ENCODE measurements at regions of chr2 and their contacts with region 1.

Region 1: DNA sequence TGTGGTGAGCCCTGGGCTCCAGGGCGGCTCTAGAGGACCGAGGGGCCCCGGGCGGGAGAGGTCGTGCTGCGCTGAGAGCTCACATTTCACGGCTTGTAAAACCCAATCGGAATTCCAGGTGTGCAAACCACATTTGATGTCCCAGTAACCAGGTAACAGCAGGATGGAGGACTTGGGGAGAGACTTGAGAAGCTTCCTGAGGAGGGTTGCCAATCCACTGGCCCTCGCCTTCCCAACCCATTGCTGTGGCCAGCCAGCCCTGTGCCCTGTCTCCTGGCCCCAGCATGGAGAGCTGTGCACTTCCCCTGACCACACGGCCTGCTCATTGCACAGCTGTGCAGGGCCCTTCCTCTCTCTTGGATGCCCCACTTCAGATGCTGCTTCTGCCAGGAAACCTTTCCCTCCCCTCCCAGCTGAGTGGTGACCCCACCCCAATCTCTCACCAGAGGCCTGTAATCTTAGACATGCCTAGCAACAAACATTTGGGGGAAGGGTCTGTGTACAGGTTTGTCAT is 39.6 kb downstream of the ASB1 start:
- DNase-seq: no peak
- ATAC-seq: no peak
- H3K4me3 Mint-ChIP-seq: no peak overlapping the region
- H3K27ac Mint-ChIP-seq: no peak overlapping the region
- H3K4me1 Mint-ChIP-seq: peaks cover 9% of the 10 kb centered on the region
- H3K27me3 Mint-ChIP-seq: peaks cover 4% of the 10 kb centered on the region

Region 2: GRCh38 chr2:238370823-238371372 is 95.4 kb before region 1 on chr2:
- CTCF ChIA-PET with region 1: interaction called, 15 read pairs
- DNase-seq: peak; percentile 67
- ATAC-seq: peak; percentile 76
- H3K4me3 Mint-ChIP-seq: no peak overlapping the region
- H3K27ac Mint-ChIP-seq: no peak overlapping the region
- H3K4me1 Mint-ChIP-seq: peaks cover 5% of the 10 kb centered on the region
- H3K27me3 Mint-ChIP-seq: no peaks in the 10 kb centered on the region

Region 3: GRCh38 chr2:238513346-238513745 is 47.0 kb after region 1 on chr2:
- CTCF ChIA-PET with region 1: no interaction called
- DNase-seq: peak; percentile 62
- ATAC-seq: peak; percentile 63
- H3K4me3 Mint-ChIP-seq: no peak overlapping the region
- H3K27ac Mint-ChIP-seq: no peak overlapping the region
- H3K4me1 Mint-ChIP-seq: peaks cover 4% of the 10 kb centered on the region
- H3K27me3 Mint-ChIP-seq: peaks cover 10% of the 10 kb centered on the region

Region 4: DNA sequence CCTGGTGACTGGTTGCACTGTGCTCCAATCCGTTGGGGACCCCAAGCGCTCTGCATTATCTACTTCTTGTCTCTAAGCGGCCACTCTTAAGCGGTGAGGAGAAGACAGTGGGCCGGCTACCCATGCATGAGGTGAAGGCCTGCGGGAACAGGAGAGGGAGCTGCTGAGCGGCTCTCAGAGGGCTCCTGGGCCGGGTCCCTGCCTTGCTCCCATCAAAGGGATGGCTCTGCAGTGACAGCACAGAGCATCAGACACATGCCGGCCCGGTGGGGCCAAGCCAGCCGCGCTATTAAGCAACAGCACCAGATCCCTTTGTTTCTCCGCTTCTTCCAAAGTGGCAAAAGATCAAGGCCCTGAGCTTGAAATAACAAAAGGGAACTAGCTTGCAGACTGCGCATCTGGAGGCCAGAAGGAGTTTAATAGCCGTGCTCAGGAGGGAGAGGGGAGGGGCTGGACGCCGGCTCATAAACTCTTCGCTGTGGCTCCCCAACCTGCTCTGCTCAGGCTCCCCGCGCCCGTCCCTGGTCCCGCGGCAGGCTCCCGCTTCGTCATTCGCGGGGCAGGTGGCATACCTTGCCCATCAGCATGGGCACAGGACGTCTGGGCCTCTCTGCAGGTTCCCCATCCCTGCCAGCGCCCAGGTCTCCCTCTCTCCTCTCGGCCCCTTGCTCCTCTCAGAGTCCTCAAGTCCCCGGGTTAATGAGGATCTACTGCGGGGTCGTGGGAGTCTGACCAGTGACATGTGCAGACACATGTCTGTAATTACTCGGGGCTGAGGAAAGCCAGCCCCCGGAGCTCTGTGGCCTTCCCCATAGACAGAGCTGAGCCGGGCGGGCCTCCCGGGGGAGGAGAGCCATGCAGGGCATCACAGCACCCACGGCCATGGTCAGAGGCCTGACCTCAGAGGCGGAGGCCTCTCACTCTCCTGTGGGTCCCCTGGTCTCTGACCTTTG is 57.1 kb after region 1 on chr2:
- CTCF ChIA-PET with region 1: no interaction called
- DNase-seq: no peak
- ATAC-seq: no peak
- H3K4me3 Mint-ChIP-seq: no peak overlapping the region
- H3K27ac Mint-ChIP-seq: no peak overlapping the region
- H3K4me1 Mint-ChIP-seq: no peaks in the 10 kb centered on the region
- H3K27me3 Mint-ChIP-seq: peaks cover 5% of the 10 kb centered on the region

Region 5: GRCh38 chr2:238573065-238573778 is 106.9 kb after region 1 on chr2:
- CTCF ChIA-PET with region 1: no interaction called
- DNase-seq: no peak
- ATAC-seq: no peak
- H3K4me3 Mint-ChIP-seq: no peak overlapping the region
- H3K27ac Mint-ChIP-seq: no peak overlapping the region
- H3K4me1 Mint-ChIP-seq: no peaks in the 10 kb centered on the region
- H3K27me3 Mint-ChIP-seq: no peaks in the 10 kb centered on the region

Region 6: GRCh38 chr2:238875101-238875470 is 408.8 kb after region 1 on chr2:
- CTCF ChIA-PET with region 1: no interaction called
- DNase-seq: no peak
- ATAC-seq: no peak
- H3K4me3 Mint-ChIP-seq: no peak overlapping the region
- H3K27ac Mint-ChIP-seq: no peak overlapping the region
- H3K4me1 Mint-ChIP-seq: no peaks in the 10 kb centered on the region
- H3K27me3 Mint-ChIP-seq: peaks cover 3% of the 10 kb centered on the region

Measured in activated CD8-positive, alpha-beta memory T cell treated with anti-CD3 and anti-CD28 coated beads, Interleukin-2, amount 10 ng/mL, durations not matched to agents 7 days and 5 days (primary cell).